Activated T-helper 1 cell treated with anti-CD3 and anti-CD28 coated beads, Interleukin-12 subunit alpha, Interleukin-12 subunit beta, Interleukin-2, Interleukin-4 antibody, amounts not matched to agents 30 ng/mL and 10 ng/mL and 1 ng/mL, durations not matched to agents 14 hours and 24 hours and 36 hours (primary cell): ENCODE measurements at regions of chr2 and their contacts with region 1.

Region 1: GRCh38 chr2:159738509-159739390 is 26.4 kb downstream of the MARCHF7 start:
- DNase-seq: no peak
- H3K4me3 Mint-ChIP-seq: no peak overlapping the region
- H3K27ac Mint-ChIP-seq: peak overlapping the region; percentile 11
- H3K4me1 Mint-ChIP-seq: peaks cover 31% of the 10 kb centered on the region
- H3K27me3 Mint-ChIP-seq: no peaks in the 10 kb centered on the region

Region 2: GRCh38 chr2:159456491-159457426 is 282.0 kb before region 1 on chr2:
- intact Hi-C with region 1: no loop called
- DNase-seq: no peak
- H3K4me3 Mint-ChIP-seq: no peak overlapping the region
- H3K27ac Mint-ChIP-seq: no peak overlapping the region
- H3K4me1 Mint-ChIP-seq: no peaks in the 10 kb centered on the region
- H3K27me3 Mint-ChIP-seq: no peaks in the 10 kb centered on the region

Region 3: GRCh38 chr2:159725713-159726112 is 13.0 kb before region 1 on chr2:
- intact Hi-C with region 1: loop called (anchors 2 kb)
- DNase-seq: no peak
- H3K4me3 Mint-ChIP-seq: no peak overlapping the region
- H3K27ac Mint-ChIP-seq: no peak overlapping the region
- H3K4me1 Mint-ChIP-seq: peaks cover 47% of the 10 kb centered on the region
- H3K27me3 Mint-ChIP-seq: no peaks in the 10 kb centered on the region